ENCODE measurements at regions of chr15 and their contacts with region 1.

Region 1: DNA sequence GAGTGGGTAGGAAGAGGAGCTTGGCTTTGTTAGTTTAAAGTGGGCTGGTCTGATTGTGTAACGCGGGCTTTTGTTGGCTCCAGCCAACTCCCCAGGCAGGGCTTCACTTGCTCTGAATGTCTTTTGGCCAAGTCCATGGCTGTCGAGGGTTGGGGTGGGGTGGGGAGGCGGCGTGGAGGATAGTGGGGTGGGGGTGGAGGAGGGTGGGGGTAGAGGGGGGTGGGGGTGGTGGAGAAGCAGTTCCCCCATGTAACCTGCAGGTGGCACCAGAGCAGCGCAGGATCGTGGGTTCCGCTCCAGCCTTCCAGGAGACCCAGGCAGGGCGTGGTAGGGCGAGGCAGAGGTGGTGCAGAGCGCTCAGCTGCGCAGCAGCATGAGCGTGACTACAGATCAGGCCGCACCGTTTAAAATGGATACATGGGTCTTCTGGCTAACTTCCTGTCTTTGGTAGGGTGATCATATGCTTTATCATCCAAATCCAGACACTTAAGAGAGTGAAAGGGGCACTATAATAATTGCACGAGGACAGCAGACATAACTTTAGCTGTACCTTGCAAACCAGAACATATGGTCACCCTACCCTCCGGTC is 28.3 kb downstream of the GOLGA6A start:
- H3K4me3 ChIP-seq: no peak overlapping the region
- H3K27ac ChIP-seq: no peak overlapping the region
- H3K4me1 ChIP-seq: no peaks in the 10 kb centered on the region
- CTCF ChIP-seq: no peak

Region 2: DNA sequence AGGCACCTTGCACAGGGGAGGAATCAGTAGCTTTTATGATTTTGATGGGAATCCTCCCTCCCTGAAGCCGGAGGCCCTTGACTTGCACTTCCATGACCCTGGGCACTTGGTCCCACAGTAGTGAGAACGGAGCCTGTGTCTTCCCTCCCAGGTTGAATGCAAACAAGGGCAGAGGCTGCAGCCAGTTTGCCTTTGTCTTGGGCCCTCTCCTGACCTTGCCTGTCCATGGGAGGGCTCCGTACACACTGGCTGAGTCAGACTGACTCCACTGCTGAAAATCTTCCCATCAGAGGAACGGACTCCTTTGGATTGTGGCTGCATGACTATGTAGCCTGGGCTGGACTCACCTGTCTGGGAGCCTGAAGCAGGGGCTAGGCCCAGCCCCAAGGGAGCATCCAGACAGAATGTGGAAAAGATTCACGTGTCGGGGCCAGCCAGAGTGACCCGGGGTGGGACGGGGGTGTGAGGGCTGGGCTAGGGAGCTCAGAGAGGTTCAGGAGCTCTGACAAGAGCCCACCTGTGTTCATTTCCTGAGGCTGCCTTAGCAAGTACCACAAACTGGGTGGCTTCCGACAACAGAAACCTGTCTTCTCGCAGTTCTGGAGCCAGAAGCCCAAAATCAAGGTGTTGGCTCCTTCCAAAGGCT is 171.1 kb before region 1 on chr15:
- CTCF ChIA-PET with region 1: no interaction called
- POLR2A ChIA-PET with region 1: no interaction called
- H3K4me3 ChIP-seq: no peak overlapping the region
- H3K27ac ChIP-seq: no peak overlapping the region
- H3K4me1 ChIP-seq: no peaks in the 10 kb centered on the region
- CTCF ChIP-seq: no peak

Region 3: DNA sequence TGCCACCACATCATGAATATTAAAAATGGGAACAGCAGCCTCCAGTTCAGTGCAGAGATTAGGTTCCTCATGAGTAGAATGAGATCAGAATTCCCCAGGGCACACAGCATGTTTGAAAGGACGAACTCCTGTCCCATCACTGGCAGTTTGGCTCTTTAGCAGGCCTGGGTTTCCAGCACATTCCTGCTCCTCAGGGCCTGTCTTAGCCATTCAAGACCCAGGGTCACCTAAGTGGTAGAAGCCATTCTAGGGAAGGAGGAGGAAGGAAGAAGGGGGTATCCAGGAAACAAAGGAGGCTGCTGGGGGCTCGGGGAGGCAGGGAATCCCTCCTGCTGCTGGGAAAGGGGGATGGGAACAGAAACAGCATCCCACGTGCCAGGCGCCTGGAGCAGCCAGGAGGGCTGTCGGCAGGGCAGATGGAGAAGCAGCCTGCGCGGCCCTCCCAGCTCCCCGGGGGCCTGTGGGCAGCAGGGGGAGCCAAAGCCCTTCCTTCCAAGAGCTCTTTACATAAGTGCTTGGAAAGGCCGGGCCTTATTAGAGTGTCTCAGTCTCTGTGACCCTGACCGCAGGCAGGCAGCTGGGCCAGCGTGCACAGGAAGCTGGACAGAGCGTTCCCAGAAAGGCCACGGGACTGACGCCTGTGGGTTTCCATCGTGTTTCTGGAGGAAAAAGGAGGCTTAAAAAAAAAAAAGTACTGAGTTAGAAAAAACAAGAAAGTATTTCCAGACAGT is 103.0 kb before region 1 on chr15:
- CTCF ChIA-PET with region 1: interaction called, 10 read pairs
- POLR2A ChIA-PET with region 1: no interaction called
- H3K4me3 ChIP-seq: no peak overlapping the region
- H3K27ac ChIP-seq: no peak overlapping the region; the same call in 1 of the 2 replicates
- H3K4me1 ChIP-seq: peaks cover 6% of the 10 kb centered on the region; the same call in 1 of the 2 replicates
- CTCF ChIP-seq: peak; percentile 93

Region 4: DNA sequence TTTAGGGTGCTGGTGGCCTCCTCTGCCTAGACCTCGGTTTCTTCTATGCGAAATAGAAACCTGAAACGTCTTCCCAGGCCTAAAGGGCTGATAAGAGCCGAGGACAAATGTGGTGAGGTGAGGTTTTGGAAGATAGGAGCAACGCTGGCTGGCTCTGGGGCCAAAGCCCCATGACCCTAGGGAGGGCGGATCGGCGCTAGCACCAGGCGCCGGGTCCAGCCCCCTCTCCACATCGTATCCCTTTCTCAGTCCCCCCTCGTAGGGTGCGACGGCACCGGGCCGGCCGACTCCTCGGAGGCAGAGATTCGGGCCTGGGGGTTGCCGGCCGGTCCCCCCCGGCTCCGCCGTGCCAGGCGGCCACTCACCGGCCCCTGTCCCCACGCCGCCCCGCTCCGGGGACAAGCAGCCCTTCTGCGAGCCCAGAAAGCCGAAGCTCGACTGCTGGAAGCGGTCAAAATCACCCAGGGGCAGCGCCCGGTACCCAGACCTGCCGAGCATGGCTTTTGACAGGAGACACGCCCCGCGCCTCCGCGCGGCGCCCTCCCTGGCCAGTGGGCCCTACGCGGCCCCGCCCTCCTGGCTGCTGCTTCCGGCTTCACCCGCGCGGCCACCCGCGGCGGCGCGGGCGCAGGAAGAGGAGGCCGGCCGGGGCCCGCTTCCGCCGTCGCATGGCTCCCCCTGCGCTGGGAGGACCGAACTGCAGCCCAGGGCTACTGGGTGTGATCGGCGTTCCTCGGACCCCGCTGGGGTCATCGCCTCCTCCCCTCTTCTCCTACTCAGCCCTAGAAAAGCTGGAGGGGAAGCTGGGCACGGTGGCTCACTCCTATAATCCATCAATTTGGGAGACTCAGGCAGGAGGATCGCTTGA is 62.1 kb before region 1 on chr15 and contains the start of gene STOML1:
- CTCF ChIA-PET with region 1: interaction called, 14 read pairs
- POLR2A ChIA-PET with region 1: interaction called, 3 read pairs
- H3K4me3 ChIP-seq: peak within 1 kb of the TSS; percentile 66
- H3K27ac ChIP-seq: no peak within 1 kb of the TSS
- H3K4me1 ChIP-seq: peaks cover 9% of the 10 kb centered on the region; the same call in 1 of the 2 replicates
- CTCF ChIP-seq: peak; percentile 93

Region 5: GRCh38 chr15:74209997-74210671 is 156.1 kb after region 1 on chr15:
- CTCF ChIA-PET with region 1: no interaction called
- POLR2A ChIA-PET with region 1: no interaction called
- H3K4me3 ChIP-seq: no peak overlapping the region
- H3K27ac ChIP-seq: peak overlapping the region; percentile 55
- H3K4me1 ChIP-seq: peaks cover 19% of the 10 kb centered on the region
- CTCF ChIP-seq: no peak

Measured in HEK293 (cell line).